AG04449 (cell line): ENCODE measurements at regions of chr10 and their contacts with region 1.

Region 1: DNA sequence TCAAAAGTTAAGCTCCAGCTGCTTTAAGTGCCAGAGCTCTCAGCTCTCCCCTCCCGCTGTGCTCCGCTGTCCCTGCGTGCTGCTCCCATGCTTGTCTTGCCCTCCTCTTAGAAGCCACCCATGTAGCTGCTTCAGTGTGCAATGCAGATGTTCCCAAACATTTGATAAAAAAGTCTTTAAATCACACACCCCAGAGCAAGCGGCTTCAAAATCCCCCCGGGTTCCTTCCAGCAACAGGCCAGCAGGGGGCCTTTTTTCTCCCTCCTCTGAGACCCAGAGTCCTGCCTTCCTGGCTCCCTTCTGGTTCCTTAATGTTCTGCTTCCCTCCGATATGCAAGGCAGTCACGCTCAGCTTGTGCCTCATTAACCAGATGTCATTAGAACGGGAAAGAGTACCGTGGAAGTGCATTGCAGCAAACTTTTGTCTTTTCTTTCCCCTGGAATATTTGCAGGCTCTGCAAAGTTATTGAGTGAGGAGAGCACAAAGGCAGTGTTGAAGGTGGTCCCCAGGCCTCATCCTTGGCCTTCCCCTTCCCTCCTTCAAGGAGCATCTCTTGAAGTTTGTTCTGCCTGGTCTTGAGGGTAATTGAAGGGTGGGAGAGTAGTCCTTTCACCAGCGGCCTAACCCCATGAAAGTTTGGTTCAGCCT is 25.5 kb downstream of the LDB3 start:
- DNase-seq: no peak
- H3K4me3 ChIP-seq: no peak overlapping the region
- CTCF ChIP-seq: peak; percentile 66

Region 2: DNA sequence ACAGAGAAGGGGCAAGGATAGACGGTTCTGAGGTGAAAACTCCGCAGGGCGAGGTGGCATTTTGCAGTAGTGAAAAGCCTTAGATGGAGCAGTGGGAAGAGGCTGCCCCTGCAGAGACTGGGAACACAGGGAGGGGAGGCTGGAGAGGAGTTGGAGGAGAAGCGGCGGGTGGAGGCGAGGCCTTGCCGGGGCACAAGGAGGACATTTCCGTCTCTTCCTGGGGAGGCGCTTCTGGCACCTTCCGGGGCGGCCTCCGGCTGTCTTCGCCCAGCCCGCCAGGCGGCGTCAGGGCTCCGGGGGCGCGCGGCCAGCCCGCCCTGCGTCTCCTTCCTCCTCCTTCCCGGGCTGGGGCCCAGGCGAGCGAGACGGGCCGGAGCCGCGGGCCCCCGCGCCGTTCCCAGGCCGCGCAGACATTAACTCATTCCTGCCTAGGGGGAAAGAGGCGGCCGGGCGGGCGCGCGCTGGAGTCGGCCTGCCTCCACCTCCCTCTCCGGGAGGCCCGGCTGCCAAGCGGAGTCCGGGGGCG is 17.2 kb after region 1 on chr10:
- CTCF ChIA-PET with region 1: interaction called, 34 read pairs
- POLR2A ChIA-PET with region 1: no interaction called
- DNase-seq: peak; percentile 10
- H3K4me3 ChIP-seq: peak overlapping the region; percentile 57
- CTCF ChIP-seq: peak; percentile 82

Region 3: GRCh38 chr10:86888585-86889381 is 194.9 kb after region 1 on chr10:
- CTCF ChIA-PET with region 1: interaction called, 10 read pairs
- POLR2A ChIA-PET with region 1: no interaction called
- DNase-seq: peak; percentile 3
- H3K4me3 ChIP-seq: no peak overlapping the region
- CTCF ChIP-seq: no peak

Region 4: GRCh38 chr10:86905429-86905828 is 211.6 kb after region 1 on chr10:
- CTCF ChIA-PET with region 1: interaction called, 86 read pairs
- POLR2A ChIA-PET with region 1: no interaction called
- DNase-seq: no peak
- H3K4me3 ChIP-seq: no peak overlapping the region
- CTCF ChIP-seq: no peak

Region 5: DNA sequence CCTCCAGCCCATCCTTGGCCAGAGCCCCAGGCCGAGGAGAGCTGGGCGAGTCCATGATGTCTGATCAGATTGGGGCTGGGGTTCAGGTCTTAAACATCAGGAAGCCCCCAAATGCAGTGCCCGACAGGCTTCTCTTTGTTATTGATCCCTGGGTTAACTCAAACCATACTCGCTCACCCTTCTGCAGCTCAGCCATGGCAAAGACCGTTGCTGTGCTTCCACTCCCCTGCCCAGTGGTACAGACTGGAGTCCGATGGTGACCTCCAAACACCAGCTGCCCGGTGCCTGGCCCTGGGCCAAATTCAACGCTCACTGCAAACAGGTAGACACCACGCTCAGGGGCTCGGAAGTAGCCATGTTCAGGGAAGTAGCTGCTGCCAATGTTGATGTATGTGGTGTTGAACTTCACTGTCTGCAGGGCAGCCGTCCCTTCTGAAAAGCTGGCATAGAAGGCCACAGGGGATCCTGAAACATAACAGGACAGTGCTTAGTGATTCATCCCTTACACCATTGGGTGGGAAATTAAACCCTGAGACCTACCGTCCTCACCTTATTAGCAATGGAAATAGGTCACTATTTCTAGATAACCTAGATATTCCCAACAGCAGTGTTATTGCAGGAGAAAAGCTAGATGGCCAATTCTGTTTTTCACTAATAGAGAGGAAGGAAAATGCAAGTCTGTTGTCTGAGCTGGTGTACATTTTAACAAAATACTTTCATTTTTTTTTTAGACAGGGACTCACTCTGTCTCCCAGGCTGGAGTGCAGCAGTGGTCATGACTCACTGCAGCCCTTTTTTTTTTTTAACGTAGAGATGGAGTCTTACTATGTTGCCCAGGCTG is 243.0 kb after region 1 on chr10:
- CTCF ChIA-PET with region 1: interaction called, 19 read pairs
- POLR2A ChIA-PET with region 1: no interaction called
- DNase-seq: no peak
- H3K4me3 ChIP-seq: no peak overlapping the region
- CTCF ChIP-seq: no peak